HCT116 (cell line): ENCODE measurements at regions of chr17 and their contacts with region 1.

Region 1: DNA sequence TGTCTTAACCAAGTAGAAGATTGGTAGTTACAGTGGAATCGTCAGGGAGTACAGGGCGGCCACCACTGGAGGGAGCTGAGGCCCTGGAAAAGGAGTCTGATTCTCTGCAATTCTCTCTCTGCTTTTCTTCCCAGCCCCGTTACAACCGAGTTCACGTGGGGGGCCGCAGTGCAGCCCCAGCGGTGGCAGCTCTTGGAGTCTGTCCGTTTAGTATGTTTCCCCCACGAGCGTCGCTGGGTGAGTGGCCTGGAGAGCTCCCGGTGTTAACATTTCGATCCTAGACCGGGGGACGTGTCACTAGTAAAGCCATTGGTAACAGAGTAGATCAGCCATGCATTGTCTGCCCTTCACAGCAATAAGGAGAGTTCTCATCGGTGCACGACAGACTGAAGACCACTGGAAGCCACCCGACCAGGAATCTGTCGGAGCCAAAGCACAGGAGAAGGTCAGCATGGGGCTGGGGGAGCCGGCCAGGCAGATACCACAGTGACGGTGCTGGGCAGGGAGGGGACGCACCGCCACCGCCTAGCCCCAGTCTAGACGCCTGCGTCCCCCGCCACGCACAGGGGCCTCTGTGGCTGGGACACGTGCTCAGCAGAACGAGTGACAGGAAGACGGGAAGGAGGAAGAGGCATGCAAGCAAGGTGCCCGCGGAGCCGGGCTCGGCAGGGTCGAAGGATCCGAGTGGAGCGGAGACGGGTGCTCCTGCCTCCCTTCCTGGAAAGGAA is 15.7 kb downstream of the SLC16A3 start:
- DNase-seq: no peak
- ATAC-seq: no peak
- H3K4me3 ChIP-seq: no peak overlapping the region
- H3K27ac ChIP-seq: peak overlapping the region; percentile 31
- H3K4me1 ChIP-seq: peaks cover 25 to 63% of the 10 kb centered on the region in 2 experiments
- H3K27me3 ChIP-seq: no peaks in the 10 kb centered on the region
- CTCF ChIP-seq: peak in 2 of 3 experiments; percentile 57 to 87; a peak in 5 of 6 replicates
- POLR2A ChIP-seq: no peak
- RAD21 ChIP-seq: peak; percentile 83

Region 2: GRCh38 chr17:82320956-82321927 is 76.7 kb after region 1 on chr17:
- CTCF ChIA-PET with region 1: no interaction called
- POLR2A ChIA-PET with region 1: no interaction called
- RAD21 ChIA-PET with region 1: no interaction called
- intact Hi-C with region 1: loop called (anchors 1 kb)
- DNase-seq: no peak
- ATAC-seq: peak; percentile 80
- H3K4me3 ChIP-seq: no peak overlapping the region
- H3K27ac ChIP-seq: no peak overlapping the region
- H3K4me1 ChIP-seq: peaks cover 0 to 15% of the 10 kb centered on the region in 2 experiments; a peak in 2 of 4 replicates
- H3K27me3 ChIP-seq: no peaks in the 10 kb centered on the region
- CTCF ChIP-seq: peak in 2 of 3 experiments; percentile 94 to 97
- POLR2A ChIP-seq: no peak
- RAD21 ChIP-seq: peak; percentile 94

Region 3: DNA sequence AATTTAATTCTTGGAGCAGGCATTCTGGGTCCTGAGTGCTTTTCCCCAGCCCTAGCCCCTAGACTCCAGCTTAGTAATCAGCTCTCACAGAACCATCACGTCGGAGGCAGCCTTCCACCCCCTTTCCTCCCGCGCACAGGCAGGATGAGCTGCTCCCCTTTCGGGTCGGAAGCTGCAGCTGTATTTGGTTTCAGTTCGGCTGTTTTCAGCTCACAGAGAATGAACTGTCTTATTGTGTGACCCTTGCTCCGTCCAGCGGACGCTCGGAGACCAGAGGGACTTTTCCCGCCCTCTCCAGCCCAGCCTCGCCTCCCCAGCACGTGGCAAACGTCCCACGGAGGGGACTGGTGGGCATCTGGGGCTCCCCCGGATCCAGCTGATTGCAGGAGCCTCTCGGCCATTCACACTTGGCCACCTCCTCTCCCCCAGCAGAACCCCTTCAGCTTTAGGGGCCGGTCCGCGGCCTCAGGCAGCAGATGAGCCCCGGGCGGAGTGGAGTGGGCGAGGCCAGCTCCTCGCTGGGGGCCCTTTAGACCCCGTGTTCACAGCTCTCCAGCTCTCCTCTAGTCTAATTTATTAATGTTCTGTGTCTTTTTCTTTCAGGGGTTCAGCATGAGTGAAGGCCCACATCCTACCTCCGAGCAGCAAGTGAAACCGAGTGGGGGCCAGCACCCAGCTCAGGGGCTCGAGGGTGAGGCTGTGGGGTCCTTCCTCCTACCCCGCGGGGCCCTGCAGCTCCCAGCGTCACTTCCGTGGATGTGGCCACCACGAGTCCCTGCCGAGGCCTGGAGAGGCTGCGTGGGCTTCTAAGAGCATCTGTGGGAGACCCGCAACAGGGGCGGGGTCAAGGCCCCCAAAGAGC is 126.1 kb after region 1 on chr17:
- CTCF ChIA-PET with region 1: no interaction called
- POLR2A ChIA-PET with region 1: no interaction called
- RAD21 ChIA-PET with region 1: no interaction called
- intact Hi-C with region 1: no loop called
- DNase-seq: no peak
- ATAC-seq: no peak
- H3K4me3 ChIP-seq: no peak overlapping the region
- H3K27ac ChIP-seq: no peak overlapping the region
- H3K4me1 ChIP-seq: peaks cover 15 to 19% of the 10 kb centered on the region in 2 experiments
- H3K27me3 ChIP-seq: no peaks in the 10 kb centered on the region
- CTCF ChIP-seq: no peak
- POLR2A ChIP-seq: no peak
- RAD21 ChIP-seq: no peak